Caco-2 (cell line): ENCODE measurements at regions of chr5 and their contacts with region 1.

Region 1: GRCh38 chr5:179623003-179623880 is at the start of gene HNRNPH1:
- DNase-seq: peak; percentile 98 to 99
- H3K4me3 ChIP-seq: peak within 1 kb of the TSS; percentile 94
- H3K4me3 Mint-ChIP-seq: peak within 1 kb of the TSS; percentile 95
- H3K27ac Mint-ChIP-seq: peak within 1 kb of the TSS; percentile 99
- H3K4me1 ChIP-seq: peaks cover 28% of the 10 kb centered on the region
- H3K4me1 Mint-ChIP-seq: peaks cover 35% of the 10 kb centered on the region
- H3K27me3 ChIP-seq: no peaks in the 10 kb centered on the region
- H3K27me3 Mint-ChIP-seq: peaks cover 3% of the 10 kb centered on the region
- CTCF ChIP-seq: peak in 1 of 2 experiments; percentile 11
- total RNA-seq, gene HNRNPH1: 914 and 940 TPM in 2 replicates

Region 2: GRCh38 chr5:179559284-179560252 is 63.7 kb before region 1 on chr5:
- CTCF ChIA-PET with region 1: no interaction called
- POLR2A ChIA-PET with region 1: interaction called, 23 read pairs
- intact Hi-C with region 1: loop called (anchors 5 kb)
- DNase-seq: peak; percentile 99
- H3K4me3 ChIP-seq: peak overlapping the region; percentile 97
- H3K4me3 Mint-ChIP-seq: peak overlapping the region; percentile 91
- H3K27ac Mint-ChIP-seq: peak overlapping the region; percentile 91
- H3K4me1 ChIP-seq: no peaks in the 10 kb centered on the region
- H3K4me1 Mint-ChIP-seq: peaks cover 8% of the 10 kb centered on the region
- H3K27me3 ChIP-seq: no peaks in the 10 kb centered on the region
- H3K27me3 Mint-ChIP-seq: no peaks in the 10 kb centered on the region
- CTCF ChIP-seq: no peak

Region 3: GRCh38 chr5:179577286-179577960 is 45.8 kb before region 1 on chr5:
- CTCF ChIA-PET with region 1: no interaction called
- POLR2A ChIA-PET with region 1: no interaction called
- intact Hi-C with region 1: no loop called
- DNase-seq: no peak
- H3K4me3 ChIP-seq: no peak overlapping the region
- H3K4me3 Mint-ChIP-seq: no peak overlapping the region
- H3K27ac Mint-ChIP-seq: no peak overlapping the region
- H3K4me1 ChIP-seq: no peaks in the 10 kb centered on the region
- H3K4me1 Mint-ChIP-seq: no peaks in the 10 kb centered on the region
- H3K27me3 ChIP-seq: no peaks in the 10 kb centered on the region
- H3K27me3 Mint-ChIP-seq: no peaks in the 10 kb centered on the region
- CTCF ChIP-seq: no peak

Region 4: GRCh38 chr5:179678223-179679013 is 55.2 kb after region 1 on chr5:
- CTCF ChIA-PET with region 1: interaction called, 4 read pairs
- POLR2A ChIA-PET with region 1: interaction called, 8 read pairs
- intact Hi-C with region 1: loop called (anchors 2 kb)
- DNase-seq: peak; percentile 95 to 96
- H3K4me3 ChIP-seq: peak overlapping the region; percentile 72
- H3K4me3 Mint-ChIP-seq: peak overlapping the region; percentile 98
- H3K27ac Mint-ChIP-seq: peak overlapping the region; percentile 97
- H3K4me1 ChIP-seq: peaks cover 11% of the 10 kb centered on the region
- H3K4me1 Mint-ChIP-seq: peaks cover 21% of the 10 kb centered on the region
- H3K27me3 ChIP-seq: no peaks in the 10 kb centered on the region
- H3K27me3 Mint-ChIP-seq: no peaks in the 10 kb centered on the region
- CTCF ChIP-seq: no peak

Region 5: GRCh38 chr5:179732417-179732917 is 109.2 kb after region 1 on chr5 and contains the start of gene MAML1:
- CTCF ChIA-PET with region 1: interaction called, 5 read pairs
- POLR2A ChIA-PET with region 1: interaction called, 16 read pairs
- intact Hi-C with region 1: no loop called
- DNase-seq: peak; percentile 100
- H3K4me3 ChIP-seq: peak within 1 kb of the TSS; percentile 78
- H3K4me3 Mint-ChIP-seq: peak within 1 kb of the TSS; percentile 70
- H3K27ac Mint-ChIP-seq: peak within 1 kb of the TSS; percentile 85
- H3K4me1 ChIP-seq: peaks cover 13% of the 10 kb centered on the region
- H3K4me1 Mint-ChIP-seq: peaks cover 8% of the 10 kb centered on the region
- H3K27me3 ChIP-seq: no peaks in the 10 kb centered on the region
- H3K27me3 Mint-ChIP-seq: no peaks in the 10 kb centered on the region
- CTCF ChIP-seq: no peak
- total RNA-seq, gene MAML1: 39.3 and 41.3 TPM in 2 replicates